Activated B cell treated with CpG ODN at 0.5 μM for 24 hours (primary cell): ENCODE measurements at regions of chr10 and their contacts with region 1.

Region 1: GRCh38 chr10:16809074-16809718 is 8.0 kb downstream of the RSU1 start:
- DNase-seq: no peak
- ATAC-seq: peak; percentile 64
- H3K4me3 Mint-ChIP-seq: no peak overlapping the region
- H3K27ac Mint-ChIP-seq: no peak overlapping the region
- H3K4me1 Mint-ChIP-seq: peaks cover 10% of the 10 kb centered on the region
- H3K27me3 Mint-ChIP-seq: no peaks in the 10 kb centered on the region
- CTCF ChIP-seq: no peak

Region 2: DNA sequence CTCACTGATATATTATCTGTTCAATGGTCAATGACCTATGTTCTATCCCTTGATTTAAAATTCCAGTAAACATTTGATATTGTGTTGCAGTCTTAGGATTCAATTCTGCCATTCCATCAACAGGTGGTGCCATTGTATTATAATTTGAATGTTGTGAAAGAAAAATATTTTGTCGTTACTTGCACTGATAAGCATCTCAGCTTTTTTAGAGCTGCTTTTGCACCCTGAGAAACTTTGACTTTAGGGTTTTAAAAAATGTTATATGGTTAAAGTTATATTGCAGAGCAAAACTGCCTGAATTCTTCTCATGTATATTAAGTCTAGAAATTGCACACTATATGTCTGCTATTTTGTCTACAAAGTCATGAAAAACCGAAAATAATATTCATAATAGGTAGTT is 930.1 kb before region 1 on chr10:
- CTCF ChIA-PET with region 1: no interaction called
- POLR2A ChIA-PET with region 1: no interaction called
- intact Hi-C with region 1: loop called (anchors 1 kb)
- DNase-seq: no peak
- ATAC-seq: no peak
- H3K4me3 Mint-ChIP-seq: no peak overlapping the region
- H3K27ac Mint-ChIP-seq: no peak overlapping the region
- H3K4me1 Mint-ChIP-seq: no peaks in the 10 kb centered on the region
- H3K27me3 Mint-ChIP-seq: peaks cover 45% of the 10 kb centered on the region
- CTCF ChIP-seq: no peak

Region 3: DNA sequence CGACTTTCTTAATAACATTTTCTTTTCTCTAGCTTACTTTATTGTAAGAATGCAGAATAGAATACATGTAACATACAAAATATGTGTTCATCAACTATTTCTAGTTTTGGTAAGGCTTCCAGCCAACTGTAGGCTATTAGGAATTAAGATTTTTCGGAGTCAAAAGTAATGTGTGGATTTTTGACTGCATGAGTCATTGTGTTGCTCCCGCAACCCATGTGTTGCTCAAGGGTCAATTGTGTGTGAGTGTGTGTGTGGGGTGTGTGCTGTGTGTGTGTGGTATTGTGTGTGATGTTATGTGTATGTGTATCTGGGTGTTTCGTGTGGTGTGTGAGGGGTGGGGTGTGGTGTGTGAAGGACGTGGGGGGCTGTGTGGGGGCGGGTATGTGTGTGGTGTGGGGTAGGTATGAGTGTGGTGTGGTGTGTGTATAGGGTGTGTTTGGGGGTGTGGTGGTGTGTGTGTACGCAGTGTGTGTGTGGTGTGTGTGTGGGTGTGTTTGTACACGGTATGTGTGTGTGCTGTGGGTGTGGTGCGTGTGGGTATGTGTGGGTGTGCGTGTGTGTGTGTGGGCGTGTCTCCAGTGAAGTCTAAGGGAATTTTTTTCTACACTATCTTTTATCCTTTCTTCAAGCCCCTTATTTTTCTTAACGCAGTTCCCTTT is 52.5 kb before region 1 on chr10:
- CTCF ChIA-PET with region 1: no interaction called
- POLR2A ChIA-PET with region 1: no interaction called
- intact Hi-C with region 1: no loop called
- DNase-seq: no peak
- ATAC-seq: no peak
- H3K4me3 Mint-ChIP-seq: no peak overlapping the region
- H3K27ac Mint-ChIP-seq: no peak overlapping the region
- H3K4me1 Mint-ChIP-seq: no peaks in the 10 kb centered on the region
- H3K27me3 Mint-ChIP-seq: no peaks in the 10 kb centered on the region
- CTCF ChIP-seq: no peak

Region 4: DNA sequence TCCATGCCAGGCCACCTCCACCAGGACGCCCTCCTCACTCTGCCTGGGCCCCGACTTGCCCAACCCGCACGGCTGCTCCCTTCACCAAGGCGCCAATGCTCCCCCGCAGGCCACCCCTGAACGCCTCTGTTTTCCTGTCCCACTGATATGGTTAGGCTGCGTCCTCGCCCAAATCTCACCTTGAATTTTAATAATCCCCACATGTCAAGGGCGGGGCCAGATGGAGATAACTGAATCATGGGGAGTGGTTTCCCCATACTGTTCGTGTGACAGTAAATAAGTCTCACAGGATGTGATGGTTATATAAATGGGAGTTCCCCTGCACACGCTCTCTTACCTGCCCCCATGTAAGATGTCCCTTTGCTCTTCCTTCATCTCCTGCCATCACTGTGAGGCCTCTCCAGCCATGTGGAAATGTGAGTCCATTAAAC is 21.8 kb before region 1 on chr10:
- CTCF ChIA-PET with region 1: no interaction called
- POLR2A ChIA-PET with region 1: no interaction called
- intact Hi-C with region 1: no loop called
- DNase-seq: no peak
- ATAC-seq: peak; percentile 76
- H3K4me3 Mint-ChIP-seq: no peak overlapping the region
- H3K27ac Mint-ChIP-seq: peak overlapping the region; percentile 57
- H3K4me1 Mint-ChIP-seq: peaks cover 14% of the 10 kb centered on the region
- H3K27me3 Mint-ChIP-seq: no peaks in the 10 kb centered on the region
- CTCF ChIP-seq: no peak